Posterior cingulate gyrus (tissue), 11 donors: ENCODE measurements at regions of chr1 and their contacts with region 1.

Region 1: DNA sequence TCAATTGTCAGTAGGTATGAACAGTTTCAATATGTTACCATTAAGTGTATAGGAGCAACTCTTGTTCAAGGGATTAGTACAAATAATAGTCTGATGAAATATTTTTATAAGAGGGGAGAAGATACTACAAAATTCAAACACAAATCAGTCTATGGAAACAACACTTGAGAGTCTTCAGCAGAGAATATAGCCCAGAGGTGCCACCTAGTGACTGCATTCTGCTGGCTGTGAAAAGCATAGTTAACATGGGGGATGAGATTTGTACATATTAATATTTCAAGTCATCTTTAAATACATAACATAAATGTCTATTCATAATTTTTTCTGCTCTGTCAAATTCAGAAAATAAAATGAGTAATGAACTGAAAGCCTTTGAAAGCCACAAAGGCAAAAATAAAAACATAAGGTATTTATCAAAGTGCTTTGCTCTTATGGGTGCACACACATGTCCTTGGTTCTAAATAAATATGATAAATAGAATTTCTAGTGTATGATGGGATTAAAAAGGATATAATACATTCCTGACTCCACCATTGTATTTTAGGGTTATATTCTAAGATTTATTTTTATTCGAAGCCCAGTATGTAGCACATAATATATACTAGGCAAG is 440.9 kb upstream of the ZRANB2 start:
- DNase-seq: peak in 7 of 10 donors; percentile 23 to 82 (median 49)

Region 2: GRCh38 chr1:71093938-71094337 is 427.8 kb before region 1 on chr1:
- intact Hi-C with region 1: loop called (anchors 2 kb)
- DNase-seq: no peak

Region 3: DNA sequence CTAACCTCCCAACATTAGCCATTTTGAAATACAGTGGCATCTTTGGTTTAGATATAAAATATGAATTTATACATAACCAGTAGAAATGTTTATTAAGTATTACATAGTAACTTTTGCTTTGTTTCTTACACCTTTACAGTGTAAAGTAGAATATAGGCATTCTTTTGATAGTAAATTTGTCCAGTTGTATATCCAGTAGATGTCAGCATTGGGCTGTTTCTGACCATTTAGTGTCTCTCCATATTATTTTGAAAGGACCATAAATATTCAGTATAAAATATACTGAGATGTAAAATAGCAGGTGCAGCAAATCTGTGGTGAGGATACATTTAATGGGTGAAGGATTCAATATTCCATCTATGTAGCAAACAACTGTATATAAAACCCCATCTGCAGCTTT is 325.1 kb before region 1 on chr1:
- intact Hi-C with region 1: loop called (anchors 2 kb)
- DNase-seq: no peak